Activated CD4-positive, alpha-beta T cell treated with anti-CD3 and anti-CD28 coated beads, Interleukin-2, amount 10 ng/mL, durations not matched to agents 24 days and 14 days (primary cell): ENCODE measurements at regions of chr5 and their contacts with region 1.

Region 1: DNA sequence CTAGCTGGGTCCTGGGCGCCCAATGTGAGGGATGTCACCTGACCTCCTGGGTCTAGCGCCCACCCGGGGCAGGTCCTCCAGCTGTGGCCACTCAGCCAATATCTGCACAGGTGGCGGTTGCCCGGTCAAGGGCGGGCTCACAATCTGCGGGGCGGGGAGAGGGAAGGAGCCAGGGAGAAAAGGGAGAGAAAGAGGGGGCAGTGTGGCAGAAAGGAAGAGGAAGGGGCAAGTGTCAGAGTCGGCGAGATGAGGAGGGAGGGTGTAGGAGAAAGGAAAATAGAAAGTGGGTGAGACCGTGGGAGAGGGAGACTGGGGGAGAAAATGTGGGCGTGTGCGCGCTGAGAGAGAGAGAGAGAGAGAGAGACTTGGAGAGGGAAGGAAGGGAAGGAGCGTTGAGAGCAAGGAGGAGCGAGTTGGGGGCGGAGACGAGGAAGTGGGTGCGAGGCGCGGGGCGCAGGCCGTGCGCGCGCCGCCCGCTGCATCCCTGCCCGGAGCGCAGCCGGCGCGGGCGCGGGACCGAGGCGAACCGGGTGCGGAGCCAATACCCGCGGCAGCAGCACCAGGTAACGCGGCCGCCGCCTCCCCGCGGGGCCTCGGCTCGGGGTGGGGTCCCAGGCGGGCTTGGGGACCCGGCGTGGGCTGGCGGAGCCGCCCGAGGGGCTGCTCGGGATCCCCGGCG is at the start of gene HRH2:
- DNase-seq: peak; percentile 90
- H3K4me3 Mint-ChIP-seq: peak within 1 kb of the TSS; percentile 100
- H3K27ac Mint-ChIP-seq: peak within 1 kb of the TSS; percentile 98
- H3K4me1 Mint-ChIP-seq: peaks cover 77% of the 10 kb centered on the region
- H3K27me3 Mint-ChIP-seq: peaks cover 2% of the 10 kb centered on the region
- total RNA-seq, gene HRH2: 67.3 and 70.4 TPM in 2 replicates

Region 2: GRCh38 chr5:175478384-175479124 is 179.2 kb before region 1 on chr5 and contains the start of gene SFXN1:
- intact Hi-C with region 1: loop called (anchors 1 kb)
- DNase-seq: peak; percentile 96
- H3K4me3 Mint-ChIP-seq: peak within 1 kb of the TSS; percentile 95
- H3K27ac Mint-ChIP-seq: peak within 1 kb of the TSS; percentile 94
- H3K4me1 Mint-ChIP-seq: peaks cover 49% of the 10 kb centered on the region
- H3K27me3 Mint-ChIP-seq: peaks cover 11% of the 10 kb centered on the region
- total RNA-seq, gene SFXN1: 390 and 404 TPM in 2 replicates

Region 3: DNA sequence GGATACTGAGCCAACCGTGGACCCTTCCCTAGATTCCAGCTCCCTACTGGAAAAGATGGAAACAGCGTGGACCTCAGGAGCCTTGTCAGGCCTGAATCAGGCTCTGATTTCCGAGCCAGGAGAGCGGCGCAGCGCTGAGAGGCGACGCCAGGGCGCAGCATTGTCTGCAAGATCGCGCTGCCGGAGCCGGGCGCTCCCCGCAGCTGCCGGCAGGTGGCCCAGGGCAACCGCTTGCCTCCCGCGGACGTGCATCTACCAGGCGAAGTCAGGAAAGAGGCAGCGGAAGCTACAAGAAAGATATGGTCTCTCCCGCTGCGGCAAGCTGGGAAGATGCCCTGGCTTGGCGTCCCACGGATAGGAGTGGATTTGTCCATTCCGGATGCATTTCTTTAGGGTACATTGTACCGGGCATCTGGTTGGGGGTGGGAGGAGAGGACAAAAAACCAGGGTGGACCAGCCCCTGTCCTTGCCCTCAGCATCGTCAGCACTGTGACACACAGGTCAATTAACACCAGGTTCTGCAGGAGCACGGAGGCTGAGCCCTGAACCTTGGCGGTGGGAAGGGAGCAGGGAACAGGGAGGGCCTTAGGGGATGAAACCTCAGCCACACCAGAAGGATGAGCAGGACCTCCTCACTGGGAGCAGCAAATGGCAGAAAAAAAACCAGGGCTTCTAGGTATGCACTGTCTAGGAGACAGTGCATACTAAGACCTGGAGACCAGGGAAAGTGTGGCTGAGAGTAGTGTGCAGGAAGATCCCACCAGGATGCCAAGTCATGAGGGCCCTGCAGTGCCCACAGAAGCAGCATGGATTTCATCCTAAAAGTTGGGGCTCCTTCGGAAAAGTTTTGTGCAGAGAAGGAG is 123.4 kb before region 1 on chr5:
- intact Hi-C with region 1: loop called (anchors 1 kb)
- DNase-seq: peak; percentile 96
- H3K4me3 Mint-ChIP-seq: peak overlapping the region; percentile 78
- H3K27ac Mint-ChIP-seq: peak overlapping the region; percentile 73
- H3K4me1 Mint-ChIP-seq: peaks cover 50% of the 10 kb centered on the region
- H3K27me3 Mint-ChIP-seq: no peaks in the 10 kb centered on the region

Region 4: DNA sequence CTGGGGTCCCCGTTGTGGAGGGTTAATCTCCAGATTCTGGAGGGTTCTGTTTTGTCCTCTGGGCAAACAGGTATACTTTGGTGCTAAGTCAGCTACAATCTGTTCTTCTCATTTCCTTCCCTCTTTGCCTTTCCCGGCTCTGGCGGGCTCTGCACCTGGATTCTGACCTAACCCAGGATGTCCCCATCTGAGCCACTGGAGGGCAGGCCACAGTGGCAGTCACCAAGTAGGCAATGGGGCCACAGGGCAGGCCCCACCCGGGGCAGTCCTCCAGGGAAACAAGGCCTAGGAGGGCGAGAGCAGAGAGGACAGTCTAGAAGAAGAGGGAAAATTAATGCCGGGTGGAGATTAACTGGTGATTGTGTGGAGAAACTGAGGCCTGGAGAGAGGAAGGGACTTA is 40.3 kb before region 1 on chr5:
- intact Hi-C with region 1: loop called (anchors 2 kb)
- DNase-seq: no peak
- H3K4me3 Mint-ChIP-seq: no peak overlapping the region
- H3K27ac Mint-ChIP-seq: no peak overlapping the region
- H3K4me1 Mint-ChIP-seq: peaks cover 12% of the 10 kb centered on the region
- H3K27me3 Mint-ChIP-seq: peaks cover 1% of the 10 kb centered on the region

Region 5: DNA sequence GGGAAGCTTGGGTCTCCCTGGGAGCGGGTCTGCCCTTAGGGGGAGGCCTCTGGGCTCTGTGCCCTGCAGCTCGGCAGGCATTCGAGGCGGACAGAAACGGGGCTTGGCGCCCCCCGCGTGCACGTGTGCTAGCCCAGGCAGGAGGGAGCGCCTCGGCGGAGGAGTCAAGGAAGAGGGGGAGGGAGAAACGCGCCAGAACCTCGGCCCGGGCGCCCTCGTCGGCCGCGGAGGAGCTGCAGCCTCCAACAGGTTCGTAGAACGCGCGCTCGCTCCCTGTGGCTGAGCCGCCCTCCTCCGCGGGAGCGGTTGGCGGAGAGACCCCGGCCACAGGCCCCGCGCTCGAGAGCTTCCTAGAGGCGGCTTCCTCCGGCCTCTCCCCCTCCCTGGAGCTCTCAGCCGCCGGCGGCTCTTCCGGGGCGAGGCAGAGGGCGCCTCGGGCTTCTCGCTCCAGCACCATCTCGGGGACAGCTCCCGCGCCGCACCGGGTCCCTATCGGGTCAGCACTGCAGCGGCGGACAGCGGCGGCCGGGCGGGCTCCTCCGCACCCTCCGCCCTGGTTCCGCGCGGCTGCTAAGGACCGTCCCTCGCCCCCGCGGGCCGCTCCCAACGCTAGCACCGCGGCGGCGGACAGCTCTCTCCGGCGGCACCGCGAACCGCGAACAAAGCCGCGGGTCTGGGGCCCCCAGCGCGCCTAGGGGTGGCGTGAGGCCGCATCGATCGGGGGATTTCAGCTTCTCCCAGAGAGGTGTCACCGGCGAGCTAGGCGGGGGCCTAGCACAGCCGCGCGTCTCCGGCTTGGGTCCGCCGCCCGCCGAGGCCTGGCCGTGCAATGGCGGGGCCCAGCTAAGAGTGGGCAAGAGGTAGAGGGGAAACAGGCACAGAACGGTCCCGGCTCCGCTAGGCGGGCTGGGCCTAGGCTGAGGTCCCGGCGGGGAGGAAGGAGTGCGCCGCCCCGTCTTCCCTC is 139.1 kb after region 1 on chr5:
- intact Hi-C with region 1: loop called (anchors 2 kb)
- DNase-seq: peak; percentile 95
- H3K4me3 Mint-ChIP-seq: no peak overlapping the region
- H3K27ac Mint-ChIP-seq: no peak overlapping the region
- H3K4me1 Mint-ChIP-seq: peaks cover 2% of the 10 kb centered on the region
- H3K27me3 Mint-ChIP-seq: peaks cover 39% of the 10 kb centered on the region